ENCODE measurements at regions of chr11 and their contacts with region 1.

Region 1: DNA sequence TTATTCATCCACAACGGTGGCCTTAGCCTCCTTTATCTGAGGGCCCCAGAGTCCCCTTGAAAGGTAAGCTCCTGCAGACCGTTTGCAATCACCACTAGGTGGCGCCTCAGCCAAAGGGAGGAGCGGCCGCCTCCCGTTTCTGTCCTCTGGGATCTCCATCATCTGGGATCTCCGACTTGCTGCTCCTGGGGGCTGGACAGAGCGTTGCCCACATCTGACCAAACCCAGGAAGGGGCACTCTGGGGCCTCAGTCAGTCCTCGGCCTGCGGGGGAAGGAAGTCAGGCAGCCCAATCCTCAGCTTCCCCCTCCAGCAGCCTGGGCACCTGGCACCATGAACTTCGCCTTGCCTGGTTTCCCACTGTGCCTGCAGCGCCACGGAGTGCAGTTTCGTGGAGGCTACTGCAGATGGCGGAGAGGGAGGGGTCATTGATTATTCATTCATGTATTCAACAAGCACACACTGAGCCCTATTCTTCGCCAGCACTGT is 23.5 kb downstream of the TP53I11 start:
- DNase-seq: peak; percentile 82
- H3K4me3 ChIP-seq: peak overlapping the region in 1 of 2 experiments; percentile 21; a peak in 1 of 4 replicates
- H3K27ac ChIP-seq: no peak overlapping the region
- H3K4me1 ChIP-seq: peaks cover 0 to 8% of the 10 kb centered on the region in 2 experiments; a peak in 1 of 4 replicates
- H3K27me3 ChIP-seq: no peaks in the 10 kb centered on the region
- CTCF ChIP-seq: peak; percentile 91
- EP300 ChIP-seq: no peak
- RAD21 ChIP-seq: peak; percentile 68

Region 2: DNA sequence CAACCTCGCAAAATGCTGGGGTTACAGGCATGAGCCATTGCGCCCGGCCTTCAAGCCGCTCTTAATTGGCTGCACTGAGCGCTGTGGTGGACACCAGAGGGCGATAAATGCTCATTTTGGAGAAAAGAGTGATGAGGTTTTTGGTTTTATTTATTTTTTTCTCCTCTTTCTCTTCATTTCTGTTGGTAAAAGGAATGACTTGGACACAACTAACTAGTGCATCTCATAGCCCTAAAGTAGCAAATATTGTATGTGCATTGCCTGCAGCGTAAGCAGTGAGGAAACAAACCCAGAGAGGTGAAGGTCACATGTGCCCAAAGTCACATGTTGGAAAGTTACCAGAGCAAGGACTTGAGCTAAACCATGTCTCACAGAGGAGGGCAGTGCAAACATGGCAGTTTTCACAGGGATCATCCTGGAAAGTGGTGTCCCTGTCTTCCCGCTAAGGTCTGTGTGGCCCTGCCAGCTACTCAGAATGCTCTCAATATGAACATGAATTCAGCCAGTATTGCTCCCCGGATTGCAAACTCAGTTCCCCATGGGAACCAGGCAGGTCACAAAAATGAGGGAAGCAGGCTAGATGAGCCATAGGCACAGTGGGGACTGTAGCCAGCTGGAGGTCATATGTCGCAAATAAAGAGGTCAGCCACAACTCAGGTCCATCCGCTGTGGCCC is 370.3 kb before region 1 on chr11:
- CTCF ChIA-PET with region 1: interaction called, 18 read pairs
- POLR2A ChIA-PET with region 1: no interaction called
- DNase-seq: no peak
- H3K4me3 ChIP-seq: peak overlapping the region in 1 of 2 experiments; percentile 28; a peak in 1 of 4 replicates
- H3K27ac ChIP-seq: no peak overlapping the region
- H3K4me1 ChIP-seq: peaks cover 0 to 5% of the 10 kb centered on the region in 2 experiments; a peak in 1 of 4 replicates
- H3K27me3 ChIP-seq: no peaks in the 10 kb centered on the region
- CTCF ChIP-seq: peak; percentile 91
- EP300 ChIP-seq: no peak
- RAD21 ChIP-seq: peak; percentile 85

Region 3: GRCh38 chr11:44627911-44628729 is 299.1 kb before region 1 on chr11:
- CTCF ChIA-PET with region 1: interaction called, 34 read pairs
- POLR2A ChIA-PET with region 1: no interaction called
- DNase-seq: peak; percentile 92
- H3K4me3 ChIP-seq: no peak overlapping the region
- H3K27ac ChIP-seq: peak overlapping the region in 1 of 2 experiments; percentile 86; a peak in 2 of 4 replicates
- H3K4me1 ChIP-seq: peaks cover 6 to 41% of the 10 kb centered on the region in 2 experiments; a peak in 2 of 4 replicates
- H3K27me3 ChIP-seq: no peaks in the 10 kb centered on the region; the same call in 1 of the 2 replicates
- CTCF ChIP-seq: no peak
- EP300 ChIP-seq: peak in 1 of 2 experiments; percentile 58; a peak in 1 of 4 replicates
- RAD21 ChIP-seq: peak; percentile 31

Region 4: GRCh38 chr11:44886790-44887140 is 40.5 kb before region 1 on chr11:
- CTCF ChIA-PET with region 1: no interaction called
- POLR2A ChIA-PET with region 1: no interaction called
- DNase-seq: no peak
- H3K4me3 ChIP-seq: no peak overlapping the region
- H3K27ac ChIP-seq: no peak overlapping the region
- H3K4me1 ChIP-seq: peaks cover 5 to 18% of the 10 kb centered on the region in 2 experiments; a peak in 1 of 4 replicates
- H3K27me3 ChIP-seq: no peaks in the 10 kb centered on the region
- CTCF ChIP-seq: no peak
- EP300 ChIP-seq: no peak
- RAD21 ChIP-seq: no peak

Region 5: DNA sequence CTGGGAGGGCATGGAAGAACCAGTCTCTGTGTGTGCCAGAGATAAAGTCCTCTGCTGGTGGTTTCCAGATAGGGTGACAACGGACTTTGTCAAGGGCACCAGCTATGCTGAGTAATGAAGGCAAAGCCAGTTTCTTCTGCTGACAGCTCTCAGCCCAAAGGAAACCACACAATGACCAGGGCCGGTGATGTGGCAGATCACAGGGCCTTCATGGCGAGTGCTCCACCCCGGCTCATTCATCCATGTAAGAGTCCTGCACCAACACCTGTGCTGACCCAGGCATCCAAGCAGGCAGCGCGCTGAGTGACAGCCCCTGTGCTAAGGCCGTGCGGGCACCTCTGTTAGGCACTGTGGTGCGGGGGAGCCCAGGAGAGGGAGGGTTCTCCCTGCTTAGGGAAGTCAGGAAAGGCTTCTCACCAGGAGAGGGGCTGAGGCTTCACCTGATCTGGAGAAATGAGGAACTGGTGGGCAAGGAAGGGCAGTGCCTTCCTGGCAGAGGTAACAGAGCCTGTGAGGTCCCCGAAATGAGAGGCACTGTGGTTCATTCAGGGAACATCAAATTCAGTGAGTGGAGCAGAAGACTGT is 10.3 kb before region 1 on chr11:
- CTCF ChIA-PET with region 1: interaction called, 33 read pairs
- POLR2A ChIA-PET with region 1: no interaction called
- DNase-seq: no peak
- H3K4me3 ChIP-seq: no peak overlapping the region
- H3K27ac ChIP-seq: no peak overlapping the region
- H3K4me1 ChIP-seq: peaks cover 0 to 2% of the 10 kb centered on the region in 2 experiments; a peak in 1 of 4 replicates
- H3K27me3 ChIP-seq: no peaks in the 10 kb centered on the region
- CTCF ChIP-seq: no peak
- EP300 ChIP-seq: no peak
- RAD21 ChIP-seq: no peak

Region 6: DNA sequence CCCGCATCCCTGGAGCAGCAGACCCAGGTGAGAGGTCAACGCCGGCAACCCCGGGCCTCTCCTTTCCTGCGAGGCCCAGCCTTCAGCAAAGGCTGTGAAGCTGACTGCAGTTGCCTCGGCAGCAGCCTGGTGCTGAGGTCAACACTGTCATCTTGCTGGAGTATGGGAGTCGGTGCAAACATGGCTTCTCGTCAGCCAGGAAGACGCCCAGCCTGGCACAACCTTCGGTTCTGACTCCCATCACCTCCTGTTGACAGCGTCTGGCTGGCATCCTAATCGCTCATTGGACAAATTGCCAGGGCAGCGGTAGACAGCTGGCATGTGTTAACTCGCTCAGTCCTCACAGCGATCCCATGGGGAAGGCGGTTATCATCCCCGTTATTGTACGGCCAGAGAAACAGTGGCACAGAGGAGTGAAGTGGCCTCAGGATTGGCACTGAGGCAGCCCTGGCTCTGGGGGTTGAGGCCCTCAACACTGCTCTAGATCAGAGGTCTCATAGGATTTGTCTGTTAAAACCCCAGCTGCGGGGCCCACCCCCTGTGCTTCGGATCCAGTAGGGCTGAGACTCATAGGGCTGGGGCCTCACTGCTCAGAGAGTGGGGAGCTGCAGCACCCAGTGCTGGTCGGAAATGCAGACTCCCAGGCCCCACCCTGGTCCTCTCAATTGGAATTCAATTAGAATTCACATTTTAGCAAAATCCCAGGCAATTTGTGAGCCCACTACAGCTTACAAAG is 62.8 kb after region 1 on chr11:
- CTCF ChIA-PET with region 1: interaction called, 10 read pairs
- POLR2A ChIA-PET with region 1: no interaction called
- DNase-seq: peak; percentile 69
- H3K4me3 ChIP-seq: no peak overlapping the region
- H3K27ac ChIP-seq: peak overlapping the region in 1 of 2 experiments; percentile 4; a peak in 1 of 4 replicates
- H3K4me1 ChIP-seq: peaks cover 0 to 24% of the 10 kb centered on the region in 2 experiments; a peak in 2 of 4 replicates
- H3K27me3 ChIP-seq: peaks cover 23% of the 10 kb centered on the region
- CTCF ChIP-seq: no peak
- EP300 ChIP-seq: no peak
- RAD21 ChIP-seq: no peak